GM10248 (cell line): ENCODE measurements at regions of chr18 and their contacts with region 1.

Region 1: GRCh38 chr18:56789004-56789888 is 138.1 kb downstream of the WDR7 start:
- DNase-seq: peak; percentile 18
- CTCF ChIP-seq: peak; percentile 53

Region 2: DNA sequence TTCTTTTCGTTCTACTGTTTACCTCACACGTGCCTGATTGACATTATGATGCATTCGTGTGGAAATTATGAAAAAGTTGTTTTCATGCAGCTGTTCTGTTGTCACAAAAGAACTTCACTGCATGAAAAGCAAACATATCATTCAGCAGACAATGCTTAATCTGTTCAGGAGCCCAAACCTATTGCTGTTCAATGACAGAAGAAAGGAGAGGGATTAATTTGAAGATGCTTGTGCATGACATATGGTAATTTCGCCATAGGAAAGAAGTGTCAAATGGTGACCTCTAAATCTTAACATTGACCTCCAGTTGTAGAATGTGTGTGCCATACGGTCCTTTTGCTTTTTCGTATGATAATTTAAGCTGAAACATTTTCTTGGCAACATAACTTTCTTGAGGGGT is 13.5 kb before region 1 on chr18:
- CTCF ChIA-PET with region 1: interaction called, 12 read pairs
- POLR2A ChIA-PET with region 1: no interaction called
- DNase-seq: no peak
- CTCF ChIP-seq: no peak

Region 3: GRCh38 chr18:56851774-56852173 is 62.5 kb after region 1 on chr18:
- CTCF ChIA-PET with region 1: no interaction called
- POLR2A ChIA-PET with region 1: no interaction called
- DNase-seq: peak; percentile 26
- CTCF ChIP-seq: no peak